Activated B cell treated with CpG ODN at 0.5 μM for 24 hours (primary cell): ENCODE measurements at regions of chr10 and their contacts with region 1.

Region 1: GRCh38 chr10:62244780-62245467 is 23.7 kb downstream of the RTKN2 start:
- DNase-seq: no peak
- ATAC-seq: peak; percentile 64
- H3K4me3 Mint-ChIP-seq: peak overlapping the region; percentile 57
- H3K27ac Mint-ChIP-seq: peak overlapping the region; percentile 72
- H3K4me1 Mint-ChIP-seq: peaks cover 45% of the 10 kb centered on the region
- H3K27me3 Mint-ChIP-seq: no peaks in the 10 kb centered on the region
- CTCF ChIP-seq: peak; percentile 74

Region 2: DNA sequence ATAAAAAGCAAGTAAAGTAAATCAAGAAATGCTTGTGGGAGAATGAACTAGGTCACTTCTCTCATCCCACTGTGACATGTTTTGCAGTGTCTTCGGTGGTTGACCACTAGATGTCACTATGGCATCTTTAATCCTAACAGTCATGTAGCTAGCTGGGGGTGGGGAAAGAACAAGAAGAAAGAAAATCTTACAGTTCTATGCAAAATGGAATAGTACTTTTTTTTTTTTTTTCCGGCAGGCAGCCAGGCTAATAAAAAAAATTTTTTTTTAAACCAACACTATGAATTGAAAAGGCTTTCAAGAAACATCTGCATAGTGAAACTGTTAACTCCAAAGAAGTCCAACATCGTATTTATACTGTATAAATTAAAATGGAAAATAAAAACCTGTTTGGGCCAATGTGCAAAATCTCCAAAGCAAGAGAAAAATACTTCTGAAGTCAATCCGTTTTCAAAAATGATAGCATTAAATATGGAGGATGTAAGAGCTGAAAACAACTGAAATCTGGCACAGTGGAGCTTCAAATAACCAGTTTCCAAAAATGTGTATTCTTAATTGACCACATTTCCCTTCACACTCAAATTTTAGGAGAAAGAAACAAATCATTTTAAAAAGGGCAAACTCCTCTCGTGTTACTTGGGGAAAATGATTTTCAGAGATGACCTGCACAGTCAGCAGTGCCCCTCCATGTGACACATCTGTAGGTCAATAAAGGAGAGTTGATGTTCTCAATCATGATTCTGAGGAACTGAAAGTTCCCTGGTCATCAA is 1428.1 kb before region 1 on chr10:
- CTCF ChIA-PET with region 1: no interaction called
- POLR2A ChIA-PET with region 1: no interaction called
- intact Hi-C with region 1: loop called (anchors 2 kb)
- DNase-seq: no peak
- ATAC-seq: peak; percentile 79
- H3K4me3 Mint-ChIP-seq: no peak overlapping the region
- H3K27ac Mint-ChIP-seq: no peak overlapping the region
- H3K4me1 Mint-ChIP-seq: peaks cover 9% of the 10 kb centered on the region
- H3K27me3 Mint-ChIP-seq: no peaks in the 10 kb centered on the region
- CTCF ChIP-seq: peak; percentile 90

Region 3: GRCh38 chr10:61733358-61733940 is 511.5 kb before region 1 on chr10:
- CTCF ChIA-PET with region 1: no interaction called
- POLR2A ChIA-PET with region 1: no interaction called
- intact Hi-C with region 1: loop called (anchors 5 kb)
- DNase-seq: no peak
- ATAC-seq: no peak
- H3K4me3 Mint-ChIP-seq: no peak overlapping the region
- H3K27ac Mint-ChIP-seq: no peak overlapping the region
- H3K4me1 Mint-ChIP-seq: no peaks in the 10 kb centered on the region
- H3K27me3 Mint-ChIP-seq: peaks cover 27% of the 10 kb centered on the region
- CTCF ChIP-seq: no peak

Region 4: DNA sequence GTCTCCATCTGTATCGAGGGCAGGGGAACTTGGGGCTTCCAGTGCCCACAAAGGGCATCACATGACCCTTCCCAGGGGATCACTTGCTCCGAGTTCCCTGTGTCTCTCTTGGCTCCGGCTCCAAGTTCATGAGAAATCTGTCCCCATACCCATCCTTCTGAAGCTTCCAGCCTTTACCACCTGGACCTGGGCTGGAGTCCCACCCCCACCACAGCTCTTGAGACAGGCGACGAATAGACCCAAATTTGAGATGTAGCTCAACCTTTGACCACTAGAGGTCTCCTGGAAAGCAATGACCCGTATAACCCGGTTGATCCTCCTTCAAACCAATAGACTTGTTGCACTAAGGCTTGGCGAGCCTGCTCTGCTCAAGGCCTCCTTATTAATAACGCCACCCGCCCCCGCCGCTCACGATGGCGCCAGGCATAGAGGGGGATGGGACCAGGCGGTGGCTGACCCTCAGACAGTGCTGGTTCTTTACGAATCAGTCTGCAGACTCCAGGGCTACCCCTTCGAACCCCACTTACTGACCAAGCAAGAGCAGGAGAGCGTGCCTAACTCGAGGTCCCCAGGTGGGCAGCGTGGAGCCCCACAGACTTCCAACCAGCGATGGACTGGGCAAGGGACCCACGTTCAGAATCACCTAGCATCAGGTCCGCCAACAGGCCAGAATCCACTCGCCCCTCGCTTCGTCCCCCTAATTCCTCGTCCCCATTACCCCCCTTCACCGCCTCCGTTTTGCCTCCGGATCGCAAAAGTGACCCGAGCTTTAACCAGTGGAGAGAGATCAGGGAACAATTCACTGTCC is 347.9 kb before region 1 on chr10:
- CTCF ChIA-PET with region 1: interaction called, 35 read pairs
- POLR2A ChIA-PET with region 1: interaction called, 87 read pairs
- intact Hi-C with region 1: loop called (anchors 1 kb)
- DNase-seq: peak; percentile 43
- ATAC-seq: peak; percentile 71
- H3K4me3 Mint-ChIP-seq: peak overlapping the region; percentile 97
- H3K27ac Mint-ChIP-seq: peak overlapping the region; percentile 98
- H3K4me1 Mint-ChIP-seq: peaks cover 37% of the 10 kb centered on the region
- H3K27me3 Mint-ChIP-seq: no peaks in the 10 kb centered on the region
- CTCF ChIP-seq: no peak

Region 5: GRCh38 chr10:62045765-62046521 is 199.0 kb before region 1 on chr10:
- CTCF ChIA-PET with region 1: interaction called, 166 read pairs
- POLR2A ChIA-PET with region 1: interaction called, 52 read pairs
- intact Hi-C with region 1: no loop called
- DNase-seq: no peak
- ATAC-seq: peak; percentile 4
- H3K4me3 Mint-ChIP-seq: peak overlapping the region; percentile 85
- H3K27ac Mint-ChIP-seq: peak overlapping the region; percentile 93
- H3K4me1 Mint-ChIP-seq: peaks cover 100% of the 10 kb centered on the region
- H3K27me3 Mint-ChIP-seq: no peaks in the 10 kb centered on the region
- CTCF ChIP-seq: no peak

Region 6: DNA sequence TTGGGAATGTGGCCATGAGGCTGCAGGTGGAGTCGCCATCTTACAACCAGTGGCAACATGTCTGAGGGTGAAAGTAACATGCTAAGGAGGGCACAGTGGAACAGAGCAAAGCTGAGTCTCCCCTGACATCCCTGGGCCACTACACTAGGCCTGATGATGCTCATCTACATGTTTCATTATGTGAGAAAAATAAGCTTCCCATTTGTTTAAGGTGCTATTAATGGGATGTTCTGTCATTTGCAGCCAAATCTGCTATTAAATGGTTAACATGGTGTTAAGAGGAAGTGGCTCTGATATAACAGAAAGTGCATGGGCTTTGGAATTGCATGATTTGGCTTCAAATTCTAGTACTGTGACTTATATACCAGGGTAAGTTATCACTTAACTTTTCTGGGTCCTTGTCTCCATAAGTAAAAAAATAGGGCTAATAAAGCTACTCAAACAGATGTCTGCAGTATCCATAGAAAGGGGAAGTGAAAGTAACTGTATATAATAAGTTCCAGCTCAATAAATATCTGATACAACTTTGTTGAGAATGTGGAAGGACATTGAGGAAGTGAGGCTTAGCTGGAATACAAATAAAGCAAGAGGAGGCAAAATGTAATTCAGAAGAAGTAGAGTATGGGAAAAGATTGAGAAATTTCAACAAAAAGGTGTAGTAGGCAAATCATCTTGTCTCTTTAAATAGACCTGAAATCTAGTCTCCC is 135.2 kb before region 1 on chr10:
- CTCF ChIA-PET with region 1: interaction called, 13 read pairs
- POLR2A ChIA-PET with region 1: interaction called, 8 read pairs
- intact Hi-C with region 1: loop called (anchors 1 kb)
- DNase-seq: no peak
- ATAC-seq: peak; percentile 72
- H3K4me3 Mint-ChIP-seq: peak overlapping the region; percentile 58
- H3K27ac Mint-ChIP-seq: peak overlapping the region; percentile 87
- H3K4me1 Mint-ChIP-seq: peaks cover 70% of the 10 kb centered on the region
- H3K27me3 Mint-ChIP-seq: no peaks in the 10 kb centered on the region
- CTCF ChIP-seq: no peak

Region 7: DNA sequence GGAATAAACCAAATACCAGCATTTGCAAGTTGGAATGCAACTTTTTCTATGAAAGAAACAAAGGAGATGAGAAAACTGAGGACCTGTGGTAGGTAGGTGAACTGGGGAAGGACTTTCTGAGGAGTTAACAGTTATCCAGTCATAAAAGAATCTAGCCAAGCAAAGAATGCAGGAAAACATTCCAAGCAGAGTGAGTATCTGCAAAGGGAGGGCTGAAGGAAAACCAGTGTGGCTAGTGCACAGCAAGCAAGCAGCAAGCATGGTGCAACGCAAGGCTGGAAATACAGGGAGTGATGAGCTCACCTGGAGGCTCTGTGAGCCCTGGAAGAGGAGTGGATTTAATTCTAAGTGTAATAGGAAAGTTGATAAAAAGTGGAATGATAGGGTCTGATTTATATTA is 20.3 kb before region 1 on chr10:
- CTCF ChIA-PET with region 1: no interaction called
- POLR2A ChIA-PET with region 1: no interaction called
- intact Hi-C with region 1: no loop called
- DNase-seq: no peak
- ATAC-seq: no peak
- H3K4me3 Mint-ChIP-seq: no peak overlapping the region
- H3K27ac Mint-ChIP-seq: peak overlapping the region; percentile 12
- H3K4me1 Mint-ChIP-seq: no peaks in the 10 kb centered on the region
- H3K27me3 Mint-ChIP-seq: no peaks in the 10 kb centered on the region
- CTCF ChIP-seq: no peak

Region 8: GRCh38 chr10:62278441-62278910 is 33.6 kb after region 1 on chr10:
- CTCF ChIA-PET with region 1: no interaction called
- POLR2A ChIA-PET with region 1: no interaction called
- intact Hi-C with region 1: no loop called
- DNase-seq: no peak
- ATAC-seq: no peak
- H3K4me3 Mint-ChIP-seq: no peak overlapping the region
- H3K27ac Mint-ChIP-seq: no peak overlapping the region
- H3K4me1 Mint-ChIP-seq: no peaks in the 10 kb centered on the region
- H3K27me3 Mint-ChIP-seq: peaks cover 4% of the 10 kb centered on the region
- CTCF ChIP-seq: no peak

Region 9: DNA sequence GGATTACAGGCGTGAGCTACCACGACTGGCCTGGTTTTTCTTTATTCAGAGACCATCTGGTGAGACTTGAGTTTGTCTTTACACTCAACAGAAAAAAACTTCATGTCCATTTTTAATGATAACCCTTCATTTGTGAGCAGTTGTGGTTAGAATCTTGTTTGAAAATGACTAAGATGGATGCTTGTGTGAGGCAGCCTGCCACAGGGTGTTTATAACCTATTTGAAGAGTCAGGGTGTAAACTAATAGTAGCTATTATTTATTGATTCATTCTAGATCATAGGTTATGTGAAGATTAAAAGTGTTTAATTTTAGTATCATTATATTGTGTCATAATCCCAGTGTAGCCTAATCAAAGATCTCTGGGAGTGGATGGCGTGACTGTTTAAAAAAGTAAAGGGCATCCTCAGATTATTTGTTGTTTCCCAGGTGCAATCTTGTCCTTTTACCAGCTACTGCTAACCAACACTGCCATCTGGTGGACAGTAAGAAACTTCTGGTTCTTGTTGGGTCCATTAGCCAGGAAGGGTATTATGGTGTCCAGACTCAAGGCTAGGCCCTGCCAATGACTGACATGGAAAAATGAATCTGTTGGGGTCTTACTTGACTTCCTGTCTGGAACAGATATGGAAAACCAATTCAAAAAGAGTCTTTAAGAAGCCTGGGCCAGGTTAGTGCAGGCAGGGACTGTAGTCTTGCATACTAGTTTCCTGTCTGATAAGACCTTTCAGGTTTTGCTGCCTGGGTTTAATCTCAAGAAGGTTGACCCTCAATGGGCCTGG is 913.1 kb after region 1 on chr10:
- CTCF ChIA-PET with region 1: no interaction called
- POLR2A ChIA-PET with region 1: no interaction called
- intact Hi-C with region 1: loop called (anchors 5 kb)
- DNase-seq: no peak
- ATAC-seq: peak; percentile 67
- H3K4me3 Mint-ChIP-seq: no peak overlapping the region
- H3K27ac Mint-ChIP-seq: no peak overlapping the region
- H3K4me1 Mint-ChIP-seq: peaks cover 9% of the 10 kb centered on the region
- H3K27me3 Mint-ChIP-seq: no peaks in the 10 kb centered on the region
- CTCF ChIP-seq: no peak